IMR-90 (cell line): ENCODE measurements at regions of chr9 and their contacts with region 1.

Region 1: GRCh38 chr9:17531642-17532254 is 47.1 kb upstream of the SH3GL2 start:
- DNase-seq: peak; percentile 60
- ATAC-seq: peak; percentile 83
- H3K4me3 ChIP-seq: peak overlapping the region; percentile 24; the same call in 1 of the 2 replicates
- H3K27ac ChIP-seq: no peak overlapping the region
- H3K4me1 ChIP-seq: no peaks in the 10 kb centered on the region
- H3K27me3 ChIP-seq: peaks cover 2% of the 10 kb centered on the region; the same call in 1 of the 2 replicates
- CTCF ChIP-seq: peak; percentile 91
- POLR2A ChIP-seq: no peak
- RAD21 ChIP-seq: peak; percentile 70

Region 2: DNA sequence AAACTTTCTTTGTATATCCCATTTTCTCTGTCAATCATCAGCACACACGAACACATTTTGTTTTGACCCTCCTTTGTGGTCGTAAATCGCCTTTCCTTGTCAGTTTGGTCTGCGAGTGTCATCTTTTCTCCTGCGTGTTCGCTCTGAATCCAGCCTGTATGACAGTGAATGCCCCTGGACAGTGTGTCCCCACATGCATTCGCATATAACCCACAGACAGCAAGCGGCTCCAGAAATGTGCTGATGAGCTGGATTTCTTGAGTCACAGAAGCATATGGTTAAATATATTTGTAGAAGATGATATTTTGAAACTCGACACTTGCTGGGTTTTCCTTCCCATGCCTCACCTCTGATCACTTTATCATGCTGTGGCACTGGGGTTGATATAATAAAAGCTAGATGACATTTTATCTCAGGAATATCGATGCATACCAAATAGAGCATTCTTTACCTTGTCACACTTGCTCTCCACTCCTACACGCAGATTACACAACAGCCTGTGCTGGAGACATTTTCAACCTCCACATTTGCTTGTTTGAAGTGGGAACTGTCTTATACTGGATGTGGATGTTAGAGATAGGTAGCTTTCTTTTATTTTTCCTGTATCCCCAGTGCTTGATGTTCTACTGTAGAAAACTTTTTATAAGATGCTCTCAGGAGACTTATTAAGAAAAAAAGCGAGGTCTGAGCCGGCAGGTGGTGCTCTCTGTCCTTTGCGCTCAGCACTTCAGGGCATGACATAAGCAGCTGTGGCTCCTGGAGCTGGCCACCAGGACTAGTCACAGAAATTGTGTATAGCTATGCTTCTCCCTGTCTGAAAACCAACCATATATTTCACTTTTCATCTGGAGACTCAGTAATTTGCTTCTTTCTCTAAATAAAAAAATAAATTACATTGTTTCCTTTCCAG is 262.2 kb after region 1 on chr9:
- CTCF ChIA-PET with region 1: no interaction called
- POLR2A ChIA-PET with region 1: no interaction called
- dilution Hi-C with region 1: loop called (anchors 25 kb)
- in situ Hi-C with region 1: no loop called
- intact Hi-C with region 1: no loop called
- DNase-seq: no peak
- ATAC-seq: no peak
- H3K4me3 ChIP-seq: no peak overlapping the region
- H3K27ac ChIP-seq: no peak overlapping the region
- H3K4me1 ChIP-seq: no peaks in the 10 kb centered on the region
- H3K27me3 ChIP-seq: no peaks in the 10 kb centered on the region; the same call in none of the 2 replicates
- CTCF ChIP-seq: no peak
- POLR2A ChIP-seq: no peak
- RAD21 ChIP-seq: no peak

Region 3: GRCh38 chr9:17810728-17811571 is 279.2 kb after region 1 on chr9:
- CTCF ChIA-PET with region 1: interaction called, 12 read pairs
- POLR2A ChIA-PET with region 1: no interaction called
- dilution Hi-C with region 1: no loop called
- in situ Hi-C with region 1: loop called (anchors 5 kb)
- intact Hi-C with region 1: no loop called
- DNase-seq: peak; percentile 66
- ATAC-seq: peak; percentile 87
- H3K4me3 ChIP-seq: no peak overlapping the region
- H3K27ac ChIP-seq: no peak overlapping the region
- H3K4me1 ChIP-seq: no peaks in the 10 kb centered on the region
- H3K27me3 ChIP-seq: peaks cover 3% of the 10 kb centered on the region
- CTCF ChIP-seq: peak; percentile 91
- POLR2A ChIP-seq: no peak
- RAD21 ChIP-seq: peak; percentile 91

Region 4: DNA sequence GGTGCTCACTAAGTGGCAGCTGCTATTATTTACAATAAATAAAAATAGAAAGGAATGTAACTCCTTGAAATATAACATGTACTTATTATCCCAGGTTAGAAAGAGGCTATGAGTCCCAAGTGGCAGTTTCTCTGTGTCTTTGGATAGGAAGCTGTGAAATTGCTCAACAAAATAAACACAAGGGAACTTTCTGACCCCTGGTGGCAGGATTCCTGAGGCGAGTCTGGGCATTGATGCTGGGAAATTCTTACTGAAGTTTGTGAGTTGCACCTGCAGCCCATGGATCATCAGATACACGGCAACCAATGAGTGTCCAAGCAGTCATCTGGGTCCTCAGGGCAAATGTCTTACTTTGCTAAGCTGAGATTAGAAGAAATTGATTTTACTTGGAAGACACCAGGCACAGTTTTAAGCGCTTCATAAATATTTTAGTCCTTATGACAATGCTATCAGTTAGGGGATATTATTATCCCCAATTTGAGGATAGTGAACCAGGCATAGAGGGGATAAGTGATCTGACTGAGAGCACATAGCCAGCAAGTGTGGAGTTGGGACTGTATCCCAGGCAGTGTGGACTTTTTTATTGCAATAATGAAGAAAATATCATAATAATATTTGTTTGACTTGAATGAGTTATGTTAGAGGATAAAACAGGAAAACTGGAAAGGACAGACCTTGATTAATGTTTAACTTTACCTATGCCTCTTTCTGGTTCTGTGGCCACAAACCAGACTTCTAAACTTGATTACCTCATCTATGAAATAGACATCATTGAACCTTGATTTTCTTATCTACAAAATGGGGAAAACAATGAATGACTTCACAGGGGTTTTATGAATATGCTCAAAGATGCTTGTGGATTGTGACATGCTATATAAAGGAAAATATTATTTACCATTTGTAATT is 676.7 kb after region 1 on chr9:
- CTCF ChIA-PET with region 1: interaction called, 5 read pairs
- POLR2A ChIA-PET with region 1: no interaction called
- dilution Hi-C with region 1: no loop called
- in situ Hi-C with region 1: no loop called
- intact Hi-C with region 1: loop called (anchors 2 kb)
- DNase-seq: peak; percentile 12
- ATAC-seq: no peak
- H3K4me3 ChIP-seq: no peak overlapping the region
- H3K27ac ChIP-seq: no peak overlapping the region
- H3K4me1 ChIP-seq: no peaks in the 10 kb centered on the region
- H3K27me3 ChIP-seq: peaks cover 4% of the 10 kb centered on the region; the same call in 1 of the 2 replicates
- CTCF ChIP-seq: peak; percentile 39
- POLR2A ChIP-seq: no peak
- RAD21 ChIP-seq: peak; percentile 34; the same call in 1 of the 2 replicates

Region 5: GRCh38 chr9:19048966-19049916 is 1517.5 kb after region 1 on chr9 and contains the start of gene RRAGA:
- CTCF ChIA-PET with region 1: no interaction called
- POLR2A ChIA-PET with region 1: no interaction called
- dilution Hi-C with region 1: no loop called
- in situ Hi-C with region 1: loop called (anchors 25 kb)
- intact Hi-C with region 1: no loop called
- DNase-seq: peak; percentile 96
- ATAC-seq: peak; percentile 93
- H3K4me3 ChIP-seq: peak within 1 kb of the TSS; percentile 74
- H3K27ac ChIP-seq: peak within 1 kb of the TSS; percentile 96
- H3K4me1 ChIP-seq: peaks cover 2% of the 10 kb centered on the region; the same call in 1 of the 2 replicates
- H3K27me3 ChIP-seq: no peaks in the 10 kb centered on the region
- CTCF ChIP-seq: peak; percentile 89
- POLR2A ChIP-seq: peak; percentile 97
- RAD21 ChIP-seq: peak; percentile 62
- total RNA-seq, gene RRAGA: 63.3 and 74.7 TPM in 2 replicates